ENCODE measurements at regions of chr10 and their contacts with region 1.

Region 1: DNA sequence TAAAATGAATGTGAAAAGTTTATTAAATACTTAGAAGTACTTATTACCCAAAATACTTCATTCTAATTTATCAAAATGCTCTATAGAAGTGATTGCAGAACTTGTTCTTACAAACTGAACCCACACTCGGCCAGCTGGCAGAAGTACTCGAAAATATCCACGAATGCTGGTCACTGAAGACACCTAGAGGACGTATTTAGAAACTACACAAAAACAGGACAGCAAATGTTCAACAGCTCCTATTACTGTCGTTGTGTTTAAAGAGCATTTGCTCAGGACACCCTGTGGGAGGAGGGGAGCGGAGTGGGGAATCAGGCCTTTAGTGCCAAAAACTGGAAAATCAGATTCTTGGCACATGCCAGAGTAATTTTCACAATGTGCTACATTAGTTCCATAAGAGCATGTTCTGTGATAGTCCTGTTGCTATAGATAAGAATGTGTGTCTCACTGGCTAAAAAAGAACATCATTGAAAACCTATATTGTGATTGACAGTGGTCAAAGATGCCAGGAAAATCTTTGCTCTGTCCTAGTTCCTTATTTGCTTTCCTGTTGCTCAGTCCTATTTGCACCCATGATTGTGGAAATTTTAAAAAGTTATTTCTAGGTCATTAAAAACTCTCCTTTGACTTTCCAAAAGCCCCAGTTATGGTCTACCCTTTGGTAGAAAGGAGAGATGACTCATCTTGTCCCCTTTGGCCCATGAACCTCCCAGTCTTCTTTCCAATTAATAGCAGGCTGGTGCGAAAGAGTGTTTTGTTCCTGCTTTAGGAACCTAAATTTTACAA is 49.0 kb upstream of the NRBF2 start:
- DNase-seq: peak; percentile 33 to 70 (median 43)
- H3K4me3 ChIP-seq: no peak overlapping the region
- H3K27ac ChIP-seq: no peak overlapping the region
- H3K4me1 ChIP-seq: peaks cover 2% of the 10 kb centered on the region
- H3K27me3 ChIP-seq: no peaks in the 10 kb centered on the region
- CTCF ChIP-seq: peak in 2 of 3 donors; percentile 53
- EP300 ChIP-seq: no peak
- POLR2A ChIP-seq: no peak

Region 2: GRCh38 chr10:62594093-62594520 is 490.0 kb before region 1 on chr10:
- intact Hi-C with region 1: loop called in 1 of 4 experiments (anchors 10 kb)
- DNase-seq: peak; percentile 26 to 71 (median 55)
- H3K4me3 ChIP-seq: no peak overlapping the region
- H3K27ac ChIP-seq: no peak overlapping the region
- H3K4me1 ChIP-seq: no peaks in the 10 kb centered on the region
- H3K27me3 ChIP-seq: no peaks in the 10 kb centered on the region
- CTCF ChIP-seq: peak; percentile 50 to 72 (median 65)
- EP300 ChIP-seq: no peak
- POLR2A ChIP-seq: no peak

Region 3: GRCh38 chr10:63042256-63042655 is 41.8 kb before region 1 on chr10:
- intact Hi-C with region 1: no loop called
- DNase-seq: no peak
- H3K4me3 ChIP-seq: no peak overlapping the region
- H3K27ac ChIP-seq: no peak overlapping the region
- H3K4me1 ChIP-seq: no peaks in the 10 kb centered on the region
- H3K27me3 ChIP-seq: no peaks in the 10 kb centered on the region
- CTCF ChIP-seq: no peak
- EP300 ChIP-seq: no peak
- POLR2A ChIP-seq: no peak

Region 4: GRCh38 chr10:63206997-63207811 is 123.1 kb after region 1 on chr10:
- intact Hi-C with region 1: no loop called
- DNase-seq: peak in 3 of 5 donors; percentile 21 to 49 (median 46)
- H3K4me3 ChIP-seq: no peak overlapping the region
- H3K27ac ChIP-seq: peak overlapping the region in 1 of 2 donors; percentile 44
- H3K4me1 ChIP-seq: peaks cover 14% of the 10 kb centered on the region
- H3K27me3 ChIP-seq: no peaks in the 10 kb centered on the region
- CTCF ChIP-seq: no peak
- EP300 ChIP-seq: no peak
- POLR2A ChIP-seq: no peak